A673 (cell line): ENCODE measurements at regions of chr6 and their contacts with region 1.

Region 1: DNA sequence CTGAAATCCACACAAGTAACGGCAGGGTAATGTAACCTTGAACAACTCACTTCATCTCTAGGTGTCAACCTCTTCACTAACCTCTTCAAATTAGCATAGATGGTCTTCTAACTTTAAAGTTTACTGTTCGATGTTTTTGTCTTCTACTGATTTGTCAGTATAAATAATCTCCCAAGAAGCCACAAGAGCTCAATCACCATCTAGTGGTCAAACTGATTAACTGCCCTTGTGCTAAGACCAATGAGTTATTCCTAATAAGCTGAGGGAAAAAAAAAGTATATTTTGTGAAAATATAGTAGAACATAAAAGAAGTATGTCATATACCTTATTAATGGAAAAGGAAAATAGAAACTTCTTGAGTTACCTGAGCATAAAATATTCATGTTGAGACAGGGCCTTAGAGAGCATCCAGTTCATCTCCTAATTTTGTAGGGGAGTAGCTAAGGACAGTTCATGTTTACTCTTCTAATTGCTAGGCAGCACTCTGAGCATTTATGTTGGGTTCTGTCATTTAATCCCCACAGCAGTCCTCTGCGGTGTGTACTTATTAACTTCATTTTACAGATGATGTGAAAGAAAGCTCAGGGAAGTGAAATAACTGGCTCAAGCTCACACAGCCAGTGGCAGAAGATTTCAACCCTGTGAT is 317.1 kb downstream of the ESR1 start:
- DNase-seq: peak; percentile 52
- H3K4me3 ChIP-seq: no peak overlapping the region
- H3K27ac ChIP-seq: no peak overlapping the region
- H3K4me1 ChIP-seq: no peaks in the 10 kb centered on the region
- H3K27me3 ChIP-seq: no peaks in the 10 kb centered on the region
- CTCF ChIP-seq: peak; percentile 72

Region 2: DNA sequence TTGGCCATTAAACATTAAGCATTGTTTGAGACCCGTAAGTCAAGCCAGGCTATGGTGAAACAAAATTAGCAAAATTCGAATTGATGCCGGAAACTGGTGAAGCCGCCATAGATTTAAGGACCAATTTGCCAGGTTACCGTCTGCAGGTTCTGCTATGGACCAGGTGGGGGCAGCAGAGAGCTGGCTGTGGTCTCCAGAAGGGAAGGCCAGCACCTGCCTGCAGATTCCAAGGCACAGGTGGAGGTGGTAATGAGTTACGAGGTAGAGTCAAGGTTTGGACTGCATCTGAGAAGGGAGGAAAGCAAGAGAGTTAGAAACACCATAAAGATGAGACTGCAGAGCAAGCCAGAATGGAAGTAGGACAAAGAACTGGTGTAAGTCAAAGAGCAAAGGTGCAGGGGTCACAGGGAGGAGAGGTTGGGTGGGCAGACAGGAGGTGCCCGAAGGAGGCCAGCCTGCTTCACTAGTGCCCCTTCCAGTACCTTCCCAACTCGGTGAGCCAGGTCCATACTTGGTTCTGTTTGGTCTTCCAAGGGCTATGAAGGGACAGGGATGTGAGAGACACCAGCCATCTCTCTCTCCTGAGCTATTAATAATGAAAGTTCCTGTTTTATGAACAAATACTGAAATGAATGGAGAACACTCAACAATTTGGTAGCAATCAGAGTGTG is 448.7 kb before region 1 on chr6:
- CTCF ChIA-PET with region 1: no interaction called
- POLR2A ChIA-PET with region 1: no interaction called
- intact Hi-C with region 1: loop called (anchors 10 kb)
- DNase-seq: peak; percentile 43
- H3K4me3 ChIP-seq: no peak overlapping the region
- H3K27ac ChIP-seq: no peak overlapping the region
- H3K4me1 ChIP-seq: no peaks in the 10 kb centered on the region
- H3K27me3 ChIP-seq: no peaks in the 10 kb centered on the region
- CTCF ChIP-seq: peak; percentile 98

Region 3: GRCh38 chr6:151822260-151823111 is 302.1 kb before region 1 on chr6:
- CTCF ChIA-PET with region 1: no interaction called
- POLR2A ChIA-PET with region 1: no interaction called
- intact Hi-C with region 1: no loop called
- DNase-seq: no peak
- H3K4me3 ChIP-seq: no peak overlapping the region
- H3K27ac ChIP-seq: no peak overlapping the region
- H3K4me1 ChIP-seq: no peaks in the 10 kb centered on the region
- H3K27me3 ChIP-seq: peaks cover 34% of the 10 kb centered on the region
- CTCF ChIP-seq: no peak